H1 (cell line): ENCODE measurements at regions of chr19 and their contacts with region 1.

Region 1: GRCh38 chr19:4390567-4391305 is 9.6 kb downstream of the SH3GL1 start:
- DNase-seq: peak in 1 of 2 experiments; percentile 51
- H3K4me3 ChIP-seq: peak overlapping the region in 3 of 4 experiments; percentile 15 to 48 (median 19); a peak in 5 of 8 replicates
- H3K27ac ChIP-seq: no peak overlapping the region
- H3K4me1 ChIP-seq: peaks cover 10 to 39% (median 26%) of the 10 kb centered on the region in 4 experiments
- H3K27me3 ChIP-seq: no peaks in the 10 kb centered on the region
- CTCF ChIP-seq: no peak
- EP300 ChIP-seq: no peak
- POLR2A ChIP-seq: no peak
- RAD21 ChIP-seq: peak in 1 of 2 experiments; percentile 8; a peak in 1 of 4 replicates

Region 2: GRCh38 chr19:4352701-4353121 is 38.0 kb before region 1 on chr19:
- CTCF ChIA-PET with region 1: interaction called, 18 read pairs
- POLR2A ChIA-PET with region 1: interaction called, 4 read pairs
- DNase-seq: peak in 1 of 2 experiments; percentile 83
- H3K4me3 ChIP-seq: no peak overlapping the region
- H3K27ac ChIP-seq: no peak overlapping the region
- H3K4me1 ChIP-seq: peaks cover 0 to 2% (median 0%) of the 10 kb centered on the region in 4 experiments; a peak in 1 of 7 replicates
- H3K27me3 ChIP-seq: no peaks in the 10 kb centered on the region
- CTCF ChIP-seq: peak; percentile 67 to 79 (median 75)
- EP300 ChIP-seq: no peak
- POLR2A ChIP-seq: no peak
- RAD21 ChIP-seq: peak; percentile 56 to 64; a peak in 3 of 4 replicates

Region 3: DNA sequence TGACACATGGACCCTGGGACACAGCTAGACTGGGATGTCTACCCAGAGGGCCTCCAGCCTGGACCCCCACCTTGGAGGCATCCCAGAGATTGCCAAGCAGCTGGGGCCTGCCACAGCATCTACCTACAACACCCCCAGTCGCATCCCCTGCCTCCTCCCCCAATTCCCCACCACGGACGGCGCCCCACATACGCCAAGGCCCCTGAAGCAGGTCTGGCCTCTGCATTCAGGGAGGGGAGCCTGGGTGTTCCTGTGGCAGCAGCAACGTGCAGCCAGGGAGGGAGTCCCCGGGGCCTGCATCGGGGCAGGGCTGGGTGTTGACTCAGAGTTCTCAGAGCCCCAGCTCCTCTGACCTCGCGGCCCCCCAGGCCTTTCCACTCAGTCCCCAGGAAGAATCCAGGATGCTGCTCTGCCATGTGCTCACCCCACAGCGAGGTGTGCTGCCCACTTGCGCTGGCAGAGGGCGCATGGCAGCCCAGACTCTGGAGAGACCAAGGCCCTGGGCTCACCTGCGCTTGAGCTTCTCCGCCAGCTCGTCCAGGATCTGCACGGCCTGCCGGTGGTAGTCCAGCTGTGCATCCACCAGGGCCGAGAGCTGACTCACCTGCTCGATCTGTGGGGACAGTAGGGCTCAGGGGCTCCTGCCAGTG is 27.8 kb before region 1 on chr19:
- CTCF ChIA-PET with region 1: interaction called, 9 read pairs
- POLR2A ChIA-PET with region 1: interaction called, 12 read pairs
- DNase-seq: peak in 1 of 2 experiments; percentile 76
- H3K4me3 ChIP-seq: no peak overlapping the region
- H3K27ac ChIP-seq: no peak overlapping the region
- H3K4me1 ChIP-seq: peaks cover 0 to 13% (median 2%) of the 10 kb centered on the region in 4 experiments; a peak in 3 of 7 replicates
- H3K27me3 ChIP-seq: no peaks in the 10 kb centered on the region
- CTCF ChIP-seq: peak; percentile 60 to 77 (median 67)
- EP300 ChIP-seq: no peak
- POLR2A ChIP-seq: 0 out of 3 replicates have a peak, but pooled peaks of 1 of the 2 experiments have one; percentile 45
- RAD21 ChIP-seq: peak; percentile 51 to 58

Region 4: GRCh38 chr19:4409123-4409933 is 18.6 kb after region 1 on chr19:
- CTCF ChIA-PET with region 1: interaction called, 5 read pairs
- POLR2A ChIA-PET with region 1: interaction called, 57 read pairs
- DNase-seq: peak; percentile 73 to 87
- H3K4me3 ChIP-seq: peak overlapping the region in 3 of 4 experiments; percentile 11 to 44 (median 19); a peak in 5 of 8 replicates
- H3K27ac ChIP-seq: peak overlapping the region; percentile 80
- H3K4me1 ChIP-seq: peaks cover 6 to 25% (median 14%) of the 10 kb centered on the region in 4 experiments
- H3K27me3 ChIP-seq: no peaks in the 10 kb centered on the region
- CTCF ChIP-seq: no peak
- EP300 ChIP-seq: peak in 1 of 2 experiments; percentile 92; a peak in 1 of 3 replicates
- POLR2A ChIP-seq: peak; percentile 71 to 78
- RAD21 ChIP-seq: no peak

Region 5: DNA sequence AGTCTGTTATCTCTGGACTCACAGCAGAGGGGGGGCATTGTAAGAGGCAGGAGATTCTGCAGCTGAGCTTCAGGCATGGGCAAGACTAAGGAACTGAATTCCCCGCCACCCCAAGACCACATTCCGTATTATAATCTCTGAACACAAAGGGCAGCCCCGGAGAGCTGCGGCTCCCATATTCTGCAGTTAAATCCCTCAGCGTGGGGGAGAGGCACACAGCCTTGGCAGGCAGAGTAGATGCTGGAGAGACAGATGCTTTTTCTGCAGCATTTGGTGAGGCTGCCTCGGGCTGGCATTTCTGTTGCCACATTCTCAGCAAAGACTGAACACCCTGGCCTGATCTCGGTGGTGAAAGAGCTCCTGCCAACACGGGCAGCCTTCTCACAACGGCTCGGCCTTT is 24.6 kb after region 1 on chr19:
- CTCF ChIA-PET with region 1: interaction called, 7 read pairs
- POLR2A ChIA-PET with region 1: interaction called, 57 read pairs
- DNase-seq: no peak
- H3K4me3 ChIP-seq: peak overlapping the region in 2 of 4 experiments; percentile 15 to 35; a peak in 4 of 8 replicates
- H3K27ac ChIP-seq: peak overlapping the region; percentile 68; the same call in 1 of the 2 replicates
- H3K4me1 ChIP-seq: peaks cover 6 to 22% (median 7%) of the 10 kb centered on the region in 4 experiments; a peak in 6 of 7 replicates
- H3K27me3 ChIP-seq: no peaks in the 10 kb centered on the region
- CTCF ChIP-seq: no peak
- EP300 ChIP-seq: no peak
- POLR2A ChIP-seq: no peak; a peak in 1 of 3 replicates
- RAD21 ChIP-seq: no peak

Region 6: GRCh38 chr19:4495471-4495870 is 104.7 kb after region 1 on chr19:
- CTCF ChIA-PET with region 1: no interaction called
- POLR2A ChIA-PET with region 1: no interaction called
- DNase-seq: peak in 1 of 2 experiments; percentile 56
- H3K4me3 ChIP-seq: no peak overlapping the region
- H3K27ac ChIP-seq: no peak overlapping the region
- H3K4me1 ChIP-seq: no peaks in the 10 kb centered on the region
- H3K27me3 ChIP-seq: no peaks in the 10 kb centered on the region; a peak in 1 of 7 replicates
- CTCF ChIP-seq: peak; percentile 38 to 51 (median 46)
- EP300 ChIP-seq: no peak
- POLR2A ChIP-seq: no peak
- RAD21 ChIP-seq: peak; percentile 5 to 20; a peak in 1 of 4 replicates